Left ventricle myocardium superior (tissue), 1 donor: ENCODE measurements at regions of chr10 and their contacts with region 1.

Region 1: GRCh38 chr10:26556748-26557640 is 118.9 kb downstream of the APBB1IP start:
- DNase-seq: no peak
- ATAC-seq: peak; percentile 74

Region 2: GRCh38 chr10:25875556-25876165 is 681.3 kb before region 1 on chr10:
- intact Hi-C with region 1: loop called (anchors 5 kb)
- DNase-seq: peak; percentile 68
- ATAC-seq: no peak

Region 3: GRCh38 chr10:26334932-26335573 is 221.9 kb before region 1 on chr10:
- intact Hi-C with region 1: loop called (anchors 10 kb)
- DNase-seq: peak; percentile 32
- ATAC-seq: peak; percentile 63